Mammary epithelial cell (primary cell): ENCODE measurements at regions of chr3 and their contacts with region 1.

Region 1: DNA sequence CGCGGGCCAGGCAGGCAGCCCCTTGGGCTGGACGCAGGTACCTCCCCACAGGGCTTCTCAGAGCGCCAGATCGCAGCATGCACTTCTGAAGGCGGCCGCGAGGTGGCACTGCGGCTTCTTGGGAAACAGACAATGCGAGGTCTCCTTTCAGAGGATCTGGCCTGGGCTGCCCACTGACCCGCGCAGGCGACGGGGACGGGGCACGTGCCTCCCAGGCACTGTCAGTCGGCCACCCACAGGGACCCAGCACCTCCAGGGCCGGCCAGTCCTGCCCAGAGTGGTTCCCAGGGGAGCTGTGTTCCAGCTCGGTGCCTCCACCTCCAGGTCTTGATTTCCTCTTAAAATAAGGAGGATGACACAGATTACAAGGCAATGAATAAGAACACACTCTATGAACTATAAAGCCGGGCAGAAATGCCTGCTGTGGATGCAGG is 24.4 kb upstream of the TXNRD3 start:
- DNase-seq: peak; percentile 55
- H3K4me3 ChIP-seq: peak overlapping the region in 1 of 3 experiments; percentile 15
- H3K27ac ChIP-seq: no peak overlapping the region
- H3K4me1 ChIP-seq: peaks cover 5% of the 10 kb centered on the region
- H3K27me3 ChIP-seq: no peaks in the 10 kb centered on the region
- CTCF ChIP-seq: peak; percentile 90 to 95

Region 2: DNA sequence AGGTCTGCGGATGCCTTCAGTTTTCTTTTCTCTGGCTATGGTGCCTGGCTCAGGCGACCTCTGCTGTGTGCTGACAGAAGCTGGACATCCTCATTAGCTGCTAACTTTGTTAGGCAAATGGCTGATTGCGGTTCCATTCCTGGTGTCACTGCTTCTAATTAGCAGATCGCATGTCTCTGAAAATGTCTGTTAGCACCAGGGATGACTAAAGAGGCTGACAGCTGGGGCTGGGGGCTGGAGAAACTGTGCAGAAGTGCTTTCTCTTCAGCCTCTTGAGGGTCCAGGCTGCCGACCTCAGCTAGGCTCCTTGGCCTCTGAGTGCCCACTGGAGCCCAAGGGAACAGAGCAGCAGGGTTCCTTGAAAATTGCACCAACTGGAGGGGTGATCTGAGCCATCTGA is 64.0 kb after region 1 on chr3:
- CTCF ChIA-PET with region 1: no interaction called
- dilution Hi-C with region 1: loop called (anchors 5 kb)
- in situ Hi-C with region 1: no loop called
- intact Hi-C with region 1: no loop called
- DNase-seq: no peak
- H3K4me3 ChIP-seq: no peak overlapping the region
- H3K27ac ChIP-seq: no peak overlapping the region
- H3K4me1 ChIP-seq: no peaks in the 10 kb centered on the region
- H3K27me3 ChIP-seq: no peaks in the 10 kb centered on the region
- CTCF ChIP-seq: no peak

Region 3: GRCh38 chr3:127177231-127177630 is 497.9 kb after region 1 on chr3:
- CTCF ChIA-PET with region 1: no interaction called
- dilution Hi-C with region 1: no loop called
- in situ Hi-C with region 1: no loop called
- intact Hi-C with region 1: loop called (anchors 1 kb)
- DNase-seq: no peak
- H3K4me3 ChIP-seq: no peak overlapping the region
- H3K27ac ChIP-seq: no peak overlapping the region
- H3K4me1 ChIP-seq: no peaks in the 10 kb centered on the region
- H3K27me3 ChIP-seq: no peaks in the 10 kb centered on the region
- CTCF ChIP-seq: peak in 1 of 2 donors; percentile 35

Region 4: GRCh38 chr3:127473244-127474024 is 794.1 kb after region 1 on chr3:
- CTCF ChIA-PET with region 1: no interaction called
- dilution Hi-C with region 1: no loop called
- in situ Hi-C with region 1: loop called in 1 of 2 experiments (anchors 25 kb)
- intact Hi-C with region 1: loop called (anchors 5 kb)
- DNase-seq: no peak
- H3K4me3 ChIP-seq: no peak overlapping the region
- H3K27ac ChIP-seq: no peak overlapping the region
- H3K4me1 ChIP-seq: no peaks in the 10 kb centered on the region
- H3K27me3 ChIP-seq: no peaks in the 10 kb centered on the region
- CTCF ChIP-seq: peak; percentile 34 to 52